HCT116 (cell line): ENCODE measurements at regions of chr12 and their contacts with region 1.

Region 1: DNA sequence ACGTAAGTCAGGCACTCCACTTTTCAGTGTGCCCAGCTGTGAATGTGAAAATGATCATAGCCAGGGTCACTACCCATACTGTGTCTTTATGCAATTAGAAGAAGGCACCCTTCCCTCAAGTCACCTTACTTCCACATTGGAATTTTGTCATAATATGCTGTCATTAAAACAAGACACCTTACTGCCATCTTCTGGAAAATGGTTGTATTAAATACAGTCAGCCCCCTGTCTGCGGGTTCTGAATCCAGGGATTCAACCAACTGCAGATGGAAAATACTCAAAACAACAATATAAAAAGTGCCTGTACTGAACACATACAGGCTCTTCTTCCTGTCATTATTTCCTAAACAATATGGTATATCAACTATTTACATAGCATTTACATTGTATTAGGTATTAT is 70.2 kb upstream of the TBX5 start:
- DNase-seq: peak; percentile 13
- ATAC-seq: peak; percentile 74
- H3K4me3 ChIP-seq: no peak overlapping the region
- H3K27ac ChIP-seq: no peak overlapping the region
- H3K4me1 ChIP-seq: no peaks in the 10 kb centered on the region
- H3K27me3 ChIP-seq: peaks cover 84% of the 10 kb centered on the region
- CTCF ChIP-seq: peak; percentile 47 to 72 (median 58)
- POLR2A ChIP-seq: no peak
- RAD21 ChIP-seq: peak; percentile 63

Region 2: DNA sequence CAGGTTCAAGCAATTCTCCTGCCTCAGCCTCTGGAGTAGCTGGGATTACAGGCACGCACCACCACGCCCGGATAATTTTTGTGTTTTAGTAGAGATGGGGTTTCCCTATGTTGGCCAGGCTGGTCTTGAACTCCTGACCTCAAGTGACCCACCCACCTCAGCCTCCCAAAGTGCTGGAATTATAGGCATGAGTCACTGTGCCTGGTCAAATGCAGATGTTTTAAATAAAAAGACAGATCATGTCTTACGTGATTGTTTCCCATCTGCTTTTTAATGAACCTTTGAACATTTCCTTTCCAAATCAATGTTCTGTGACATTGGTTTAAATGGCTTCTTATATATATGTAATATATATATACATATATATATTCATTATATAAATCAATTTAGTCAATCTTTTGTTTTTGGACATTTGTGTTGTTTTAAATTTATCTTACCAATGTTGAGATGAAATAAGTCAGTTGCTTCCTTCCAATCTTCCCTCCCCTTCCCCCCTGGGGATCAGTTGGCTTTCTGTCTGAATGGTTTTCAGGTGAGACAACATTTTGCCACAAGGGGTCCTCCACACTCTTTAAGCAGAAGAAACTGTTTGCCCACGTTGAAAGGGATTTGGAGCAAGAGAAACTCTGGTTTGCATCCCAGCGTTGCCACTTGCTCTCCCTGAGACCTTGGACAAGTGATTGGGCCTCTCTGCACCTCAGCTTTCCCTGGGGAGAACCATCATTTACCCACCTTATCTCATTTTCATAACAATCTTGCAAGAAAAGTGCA is 462.4 kb before region 1 on chr12:
- CTCF ChIA-PET with region 1: no interaction called
- POLR2A ChIA-PET with region 1: no interaction called
- RAD21 ChIA-PET with region 1: no interaction called
- intact Hi-C with region 1: loop called (anchors 5 kb)
- DNase-seq: peak; percentile 31
- ATAC-seq: peak; percentile 70
- H3K4me3 ChIP-seq: no peak overlapping the region
- H3K27ac ChIP-seq: no peak overlapping the region
- H3K4me1 ChIP-seq: no peaks in the 10 kb centered on the region
- H3K27me3 ChIP-seq: peaks cover 33% of the 10 kb centered on the region
- CTCF ChIP-seq: peak; percentile 35 to 52 (median 41); a peak in 5 of 6 replicates
- POLR2A ChIP-seq: no peak
- RAD21 ChIP-seq: peak; percentile 71

Region 3: GRCh38 chr12:114166362-114166761 is 309.8 kb before region 1 on chr12:
- CTCF ChIA-PET with region 1: interaction called, 7 read pairs
- POLR2A ChIA-PET with region 1: no interaction called
- RAD21 ChIA-PET with region 1: no interaction called
- intact Hi-C with region 1: loop called (anchors 1 kb)
- DNase-seq: peak; percentile 24
- ATAC-seq: peak; percentile 76
- H3K4me3 ChIP-seq: no peak overlapping the region
- H3K27ac ChIP-seq: no peak overlapping the region
- H3K4me1 ChIP-seq: peaks cover 0 to 14% of the 10 kb centered on the region in 2 experiments; a peak in 2 of 4 replicates
- H3K27me3 ChIP-seq: peaks cover 33% of the 10 kb centered on the region
- CTCF ChIP-seq: peak; percentile 44 to 78 (median 72); a peak in 5 of 6 replicates
- POLR2A ChIP-seq: no peak
- RAD21 ChIP-seq: peak; percentile 74

Region 4: GRCh38 chr12:114355389-114356088 is 120.6 kb before region 1 on chr12:
- CTCF ChIA-PET with region 1: no interaction called
- POLR2A ChIA-PET with region 1: no interaction called
- RAD21 ChIA-PET with region 1: no interaction called
- intact Hi-C with region 1: loop called (anchors 10 kb)
- DNase-seq: peak; percentile 7
- ATAC-seq: peak; percentile 80
- H3K4me3 ChIP-seq: no peak overlapping the region
- H3K27ac ChIP-seq: no peak overlapping the region
- H3K4me1 ChIP-seq: no peaks in the 10 kb centered on the region
- H3K27me3 ChIP-seq: peaks cover 35% of the 10 kb centered on the region
- CTCF ChIP-seq: peak; percentile 48 to 51 (median 49); a peak in 5 of 6 replicates
- POLR2A ChIP-seq: no peak
- RAD21 ChIP-seq: peak; percentile 46; the same call in 1 of the 2 replicates